GM12878 (cell line): ENCODE measurements at regions of chr21 and their contacts with region 1.

Region 1: GRCh38 chr21:38244885-38245545 is 11.8 kb upstream of the KCNJ15 start:
- DNase-seq: peak; percentile 59
- ATAC-seq: peak; percentile 90
- H3K4me3 ChIP-seq: no peak overlapping the region
- H3K27ac ChIP-seq: no peak overlapping the region
- H3K4me1 ChIP-seq: peaks cover 16% of the 10 kb centered on the region
- H3K27me3 ChIP-seq: no peaks in the 10 kb centered on the region
- CTCF ChIP-seq: no peak
- EP300 ChIP-seq: peak; percentile 34 to 87; a peak in 2 of 4 replicates
- POLR2A ChIP-seq: no peak
- RAD21 ChIP-seq: no peak

Region 2: DNA sequence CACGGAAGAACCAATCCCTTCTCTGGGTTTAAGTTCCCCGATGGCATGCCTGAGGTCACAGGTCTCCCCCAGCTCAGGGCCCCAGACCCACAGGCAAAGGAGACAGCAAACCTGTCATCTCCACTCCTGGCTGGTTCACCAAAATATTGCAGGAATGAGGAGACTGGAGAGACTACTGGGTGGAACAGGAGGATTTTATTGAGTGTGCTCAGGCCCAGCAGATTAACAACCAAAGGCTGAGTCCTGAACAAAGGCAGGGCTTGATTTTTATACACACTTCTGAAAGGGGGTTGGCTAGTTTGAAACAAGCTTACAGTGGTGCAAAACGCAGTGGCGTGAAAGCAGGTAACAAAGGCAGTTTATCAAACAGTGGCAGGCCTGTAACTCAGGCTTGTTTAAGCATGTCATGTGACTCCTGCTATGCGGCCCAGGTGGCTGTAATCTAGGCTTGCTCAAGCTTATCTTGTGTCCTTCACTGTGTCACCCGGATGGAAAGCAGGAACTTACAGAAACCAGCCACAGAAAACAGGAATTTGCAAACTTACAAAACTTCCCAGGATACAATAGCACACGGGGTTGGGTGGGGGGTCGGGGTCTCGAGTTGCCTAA is 15.7 kb before region 1 on chr21:
- CTCF ChIA-PET with region 1: interaction called, 4 read pairs
- POLR2A ChIA-PET with region 1: no interaction called
- RAD21 ChIA-PET with region 1: interaction called, 9 read pairs
- SMC1A ChIA-PET with region 1: interaction called, 16 read pairs
- in situ Hi-C with region 1: no loop called
- intact Hi-C with region 1: no loop called
- DNase-seq: no peak
- ATAC-seq: no peak
- H3K4me3 ChIP-seq: no peak overlapping the region
- H3K27ac ChIP-seq: no peak overlapping the region
- H3K4me1 ChIP-seq: no peaks in the 10 kb centered on the region
- H3K27me3 ChIP-seq: no peaks in the 10 kb centered on the region
- CTCF ChIP-seq: no peak
- EP300 ChIP-seq: no peak
- POLR2A ChIP-seq: no peak
- RAD21 ChIP-seq: no peak

Region 3: GRCh38 chr21:38269576-38269936 is 24.5 kb after region 1 on chr21:
- CTCF ChIA-PET with region 1: interaction called, 7 read pairs
- POLR2A ChIA-PET with region 1: interaction called, 6 read pairs
- RAD21 ChIA-PET with region 1: interaction called, 15 read pairs
- SMC1A ChIA-PET with region 1: interaction called, 54 read pairs
- in situ Hi-C with region 1: no loop called
- intact Hi-C with region 1: loop called (anchors 1 kb)
- DNase-seq: peak; percentile 87
- ATAC-seq: peak; percentile 94
- H3K4me3 ChIP-seq: peak overlapping the region; percentile 32; the same call in 1 of the 2 replicates
- H3K27ac ChIP-seq: peak overlapping the region; percentile 96
- H3K4me1 ChIP-seq: peaks cover 40% of the 10 kb centered on the region
- H3K27me3 ChIP-seq: no peaks in the 10 kb centered on the region
- CTCF ChIP-seq: no peak
- EP300 ChIP-seq: peak; percentile 76 to 79; a peak in 2 of 4 replicates
- POLR2A ChIP-seq: no peak
- RAD21 ChIP-seq: no peak

Region 4: DNA sequence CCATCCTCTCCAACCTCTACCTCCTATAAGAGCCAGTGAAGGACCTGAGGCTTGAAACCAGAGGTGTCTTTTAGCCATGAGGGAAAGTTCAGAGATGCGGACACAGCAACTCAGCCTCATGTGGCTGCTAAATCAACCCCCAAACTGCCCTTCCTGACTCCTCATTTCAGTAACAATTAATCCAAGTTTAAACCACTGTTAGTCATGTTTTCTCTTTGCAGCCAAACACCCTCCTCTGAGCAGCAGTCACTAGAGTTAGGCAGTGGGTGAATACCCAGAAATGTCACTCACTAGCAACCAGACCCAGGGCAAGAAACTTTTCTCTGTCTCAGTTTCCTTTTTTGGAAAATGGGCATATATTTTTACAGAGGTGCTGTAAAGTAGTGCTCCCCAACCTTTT is 83.0 kb after region 1 on chr21:
- CTCF ChIA-PET with region 1: interaction called, 3 read pairs
- POLR2A ChIA-PET with region 1: no interaction called
- RAD21 ChIA-PET with region 1: no interaction called
- SMC1A ChIA-PET with region 1: interaction called, 3 read pairs
- in situ Hi-C with region 1: no loop called
- intact Hi-C with region 1: loop called (anchors 5 kb)
- DNase-seq: peak; percentile 24
- ATAC-seq: peak; percentile 87
- H3K4me3 ChIP-seq: no peak overlapping the region
- H3K27ac ChIP-seq: no peak overlapping the region
- H3K4me1 ChIP-seq: no peaks in the 10 kb centered on the region
- H3K27me3 ChIP-seq: no peaks in the 10 kb centered on the region
- CTCF ChIP-seq: no peak
- EP300 ChIP-seq: no peak
- POLR2A ChIP-seq: no peak
- RAD21 ChIP-seq: no peak